ENCODE measurements at regions of chr7 and their contacts with region 1.

Region 1: GRCh38 chr7:158157460-158157859 is 430.2 kb downstream of the PTPRN2 start:
- DNase-seq: no peak
- H3K4me3 ChIP-seq: no peak overlapping the region
- H3K27ac ChIP-seq: no peak overlapping the region
- H3K4me1 ChIP-seq: no peaks in the 10 kb centered on the region
- H3K27me3 ChIP-seq: no peaks in the 10 kb centered on the region
- CTCF ChIP-seq: no peak
- POLR2A ChIP-seq: no peak

Region 2: GRCh38 chr7:157568770-157569584 is 588.5 kb before region 1 on chr7:
- intact Hi-C with region 1: loop called (anchors 5 kb)
- DNase-seq: peak in 1 of 2 donors; percentile 20
- H3K4me3 ChIP-seq: peak overlapping the region; percentile 52 to 74 (median 62)
- H3K27ac ChIP-seq: peak overlapping the region in 1 of 2 donors; percentile 62
- H3K4me1 ChIP-seq: no peaks in the 10 kb centered on the region
- H3K27me3 ChIP-seq: no peaks in the 10 kb centered on the region
- CTCF ChIP-seq: no peak
- POLR2A ChIP-seq: no peak